MCF 10A (cell line): ENCODE measurements at regions of chr2 and their contacts with region 1.

Region 1: GRCh38 chr2:31401580-31401979 is 13.0 kb downstream of the XDH start:
- DNase-seq: peak; percentile 98
- H3K4me3 Mint-ChIP-seq: no peak overlapping the region
- H3K27ac Mint-ChIP-seq: peak overlapping the region; percentile 31
- H3K4me1 Mint-ChIP-seq: peaks cover 42% of the 10 kb centered on the region
- H3K27me3 Mint-ChIP-seq: no peaks in the 10 kb centered on the region
- CTCF ChIP-seq: no peak

Region 2: DNA sequence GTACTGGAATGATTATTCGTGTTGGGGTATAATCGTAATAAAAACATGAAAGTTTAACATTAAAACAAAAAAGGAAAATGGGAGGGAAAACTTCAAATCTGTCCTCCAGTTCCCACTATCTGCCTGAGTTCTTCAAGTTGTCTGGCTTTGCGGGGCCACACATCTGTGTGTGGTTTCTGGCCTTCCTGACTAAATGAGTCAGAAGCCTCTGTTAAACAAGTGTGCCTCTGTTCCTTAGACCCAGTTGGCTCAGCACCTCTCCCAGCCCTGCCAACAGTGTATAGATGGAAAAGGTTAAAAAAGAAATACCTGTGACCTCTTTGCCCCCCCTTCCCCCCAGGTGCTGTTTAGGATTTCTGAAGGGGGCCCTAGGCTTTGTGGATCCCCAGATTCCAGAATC is 17.2 kb before region 1 on chr2:
- CTCF ChIA-PET with region 1: interaction called, 11 read pairs
- POLR2A ChIA-PET with region 1: interaction called, 34 read pairs
- intact Hi-C with region 1: loop called (anchors 2 kb)
- DNase-seq: peak; percentile 89
- H3K4me3 Mint-ChIP-seq: peak overlapping the region; percentile 34
- H3K27ac Mint-ChIP-seq: peak overlapping the region; percentile 99
- H3K4me1 Mint-ChIP-seq: peaks cover 25% of the 10 kb centered on the region
- H3K27me3 Mint-ChIP-seq: no peaks in the 10 kb centered on the region
- CTCF ChIP-seq: no peak

Region 3: GRCh38 chr2:31390324-31390723 is 11.3 kb before region 1 on chr2:
- CTCF ChIA-PET with region 1: interaction called, 11 read pairs
- POLR2A ChIA-PET with region 1: interaction called, 34 read pairs
- intact Hi-C with region 1: loop called (anchors 2 kb)
- DNase-seq: peak; percentile 94
- H3K4me3 Mint-ChIP-seq: peak overlapping the region; percentile 4
- H3K27ac Mint-ChIP-seq: peak overlapping the region; percentile 82
- H3K4me1 Mint-ChIP-seq: peaks cover 32% of the 10 kb centered on the region
- H3K27me3 Mint-ChIP-seq: no peaks in the 10 kb centered on the region
- CTCF ChIP-seq: no peak

Region 4: DNA sequence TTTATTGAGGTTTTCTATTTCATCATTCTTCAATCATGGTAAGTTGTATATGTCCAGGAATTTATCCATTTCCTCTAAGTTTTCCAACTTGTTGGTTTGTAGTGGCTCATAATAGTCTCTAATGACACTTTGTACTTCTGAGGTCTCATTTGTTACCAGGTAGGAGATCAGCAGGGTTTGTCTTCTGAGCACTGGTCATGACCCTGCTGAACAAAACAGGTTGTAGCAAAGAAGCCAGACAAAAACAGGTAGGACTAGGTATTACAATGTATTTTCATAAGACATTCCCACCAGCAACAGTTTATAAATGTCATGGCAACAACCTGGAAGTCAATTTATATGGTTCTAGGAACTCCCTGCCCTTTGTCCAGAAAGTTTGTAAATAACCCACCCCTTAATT is 235.6 kb after region 1 on chr2:
- CTCF ChIA-PET with region 1: no interaction called
- POLR2A ChIA-PET with region 1: no interaction called
- intact Hi-C with region 1: no loop called
- DNase-seq: no peak
- H3K4me3 Mint-ChIP-seq: no peak overlapping the region
- H3K27ac Mint-ChIP-seq: no peak overlapping the region
- H3K4me1 Mint-ChIP-seq: no peaks in the 10 kb centered on the region
- H3K27me3 Mint-ChIP-seq: peaks cover 61% of the 10 kb centered on the region
- CTCF ChIP-seq: no peak